ENCODE measurements at regions of chr16 and their contacts with region 1.

Region 1: DNA sequence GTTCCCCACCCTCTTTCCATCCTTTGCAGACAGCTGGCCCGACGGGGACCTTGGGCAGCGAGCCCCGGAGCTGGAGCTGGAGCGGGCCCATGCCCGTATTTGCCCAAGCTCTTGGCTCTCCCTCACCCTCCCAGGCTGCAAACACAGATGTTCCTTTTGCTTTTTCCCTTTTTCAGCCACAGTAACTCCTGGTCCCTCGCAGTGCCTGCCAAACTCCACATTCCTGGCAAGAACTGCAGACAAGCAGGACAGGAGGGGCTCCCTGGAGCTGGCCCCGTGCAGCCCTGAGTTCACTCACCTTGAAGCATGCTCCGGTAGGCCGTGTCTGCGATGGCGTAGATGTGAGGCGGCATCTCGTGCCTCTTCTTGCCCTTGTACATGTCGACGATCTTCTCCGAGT is 33.9 kb downstream of the MYH11 start:
- DNase-seq: no peak
- ATAC-seq: no peak
- H3K4me3 Mint-ChIP-seq: no peak overlapping the region
- H3K27ac Mint-ChIP-seq: no peak overlapping the region
- H3K4me1 Mint-ChIP-seq: no peaks in the 10 kb centered on the region
- H3K27me3 Mint-ChIP-seq: no peaks in the 10 kb centered on the region; the same call in none of the 2 replicates
- CTCF ChIP-seq: no peak

Region 2: DNA sequence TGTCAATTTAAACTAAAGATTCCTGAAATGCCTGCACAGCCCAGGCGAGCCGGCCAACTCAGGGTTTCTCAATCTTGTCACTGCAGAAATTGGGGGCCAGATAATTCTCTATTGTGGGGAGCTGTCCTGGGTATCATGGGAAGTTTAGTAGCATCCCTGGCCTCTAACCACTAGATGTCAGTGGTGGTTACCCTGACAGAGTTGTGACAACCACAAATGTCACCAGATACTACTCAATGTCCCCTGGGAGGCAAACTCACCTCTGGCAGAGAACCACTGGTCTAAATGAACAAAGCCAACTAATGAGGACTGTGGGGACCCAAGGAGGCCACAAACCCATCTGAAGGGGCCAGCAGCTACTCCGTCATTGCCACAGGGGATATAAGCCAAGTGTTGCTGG is 57.1 kb before region 1 on chr16:
- CTCF ChIA-PET with region 1: interaction called, 18 read pairs
- POLR2A ChIA-PET with region 1: no interaction called
- DNase-seq: peak; percentile 26
- ATAC-seq: peak; percentile 90
- H3K4me3 Mint-ChIP-seq: no peak overlapping the region
- H3K27ac Mint-ChIP-seq: no peak overlapping the region
- H3K4me1 Mint-ChIP-seq: peaks cover 6% of the 10 kb centered on the region
- H3K27me3 Mint-ChIP-seq: no peaks in the 10 kb centered on the region
- CTCF ChIP-seq: peak; percentile 32; the same call in 1 of the 2 replicates

Region 3: DNA sequence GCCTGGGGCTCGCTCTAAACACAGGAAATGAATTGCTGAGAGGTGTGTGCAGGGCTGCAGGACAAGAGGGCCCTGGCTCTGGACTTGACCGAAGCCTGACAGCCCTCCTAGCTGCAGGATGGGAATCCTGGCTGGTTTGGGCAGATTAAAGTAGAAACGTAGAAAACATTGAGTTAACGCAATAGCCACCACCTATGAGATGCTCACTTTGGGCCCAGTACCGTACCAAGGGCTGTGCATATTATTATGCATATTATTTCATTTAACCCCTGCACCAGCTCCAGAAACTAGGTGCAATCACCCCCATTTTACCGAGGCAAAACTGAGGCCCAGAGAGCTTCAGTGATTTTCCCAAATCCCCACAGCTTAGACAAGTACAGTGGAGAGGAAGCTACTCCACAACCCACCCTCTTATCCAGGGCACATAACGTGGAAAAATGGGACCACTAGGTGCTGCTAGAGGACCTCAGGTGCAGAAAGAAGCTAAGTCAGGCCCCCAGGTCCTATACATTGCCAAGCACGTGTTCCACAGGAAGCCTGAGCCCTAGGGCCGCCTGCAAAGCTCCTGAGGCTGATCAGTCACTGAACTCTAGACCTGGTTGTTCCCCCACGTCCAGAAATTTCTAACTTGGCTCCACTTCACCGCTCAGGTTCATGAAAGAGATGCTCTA is 45.3 kb before region 1 on chr16:
- CTCF ChIA-PET with region 1: interaction called, 87 read pairs
- POLR2A ChIA-PET with region 1: no interaction called
- DNase-seq: peak; percentile 58
- ATAC-seq: peak; percentile 99
- H3K4me3 Mint-ChIP-seq: no peak overlapping the region
- H3K27ac Mint-ChIP-seq: no peak overlapping the region
- H3K4me1 Mint-ChIP-seq: peaks cover 3% of the 10 kb centered on the region; the same call in 1 of the 2 replicates
- H3K27me3 Mint-ChIP-seq: peaks cover 9% of the 10 kb centered on the region
- CTCF ChIP-seq: no peak

Region 4: GRCh38 chr16:15803618-15804017 is 19.3 kb before region 1 on chr16:
- CTCF ChIA-PET with region 1: interaction called, 17 read pairs
- POLR2A ChIA-PET with region 1: no interaction called
- DNase-seq: no peak
- ATAC-seq: no peak
- H3K4me3 Mint-ChIP-seq: no peak overlapping the region
- H3K27ac Mint-ChIP-seq: no peak overlapping the region
- H3K4me1 Mint-ChIP-seq: peaks cover 11% of the 10 kb centered on the region
- H3K27me3 Mint-ChIP-seq: no peaks in the 10 kb centered on the region
- CTCF ChIP-seq: no peak

Region 5: GRCh38 chr16:15811481-15812400 is 11.2 kb before region 1 on chr16:
- CTCF ChIA-PET with region 1: interaction called, 17 read pairs
- POLR2A ChIA-PET with region 1: no interaction called
- DNase-seq: no peak
- ATAC-seq: no peak
- H3K4me3 Mint-ChIP-seq: no peak overlapping the region
- H3K27ac Mint-ChIP-seq: no peak overlapping the region
- H3K4me1 Mint-ChIP-seq: peaks cover 11% of the 10 kb centered on the region; the same call in 1 of the 2 replicates
- H3K27me3 Mint-ChIP-seq: peaks cover 16% of the 10 kb centered on the region
- CTCF ChIP-seq: no peak

Region 6: DNA sequence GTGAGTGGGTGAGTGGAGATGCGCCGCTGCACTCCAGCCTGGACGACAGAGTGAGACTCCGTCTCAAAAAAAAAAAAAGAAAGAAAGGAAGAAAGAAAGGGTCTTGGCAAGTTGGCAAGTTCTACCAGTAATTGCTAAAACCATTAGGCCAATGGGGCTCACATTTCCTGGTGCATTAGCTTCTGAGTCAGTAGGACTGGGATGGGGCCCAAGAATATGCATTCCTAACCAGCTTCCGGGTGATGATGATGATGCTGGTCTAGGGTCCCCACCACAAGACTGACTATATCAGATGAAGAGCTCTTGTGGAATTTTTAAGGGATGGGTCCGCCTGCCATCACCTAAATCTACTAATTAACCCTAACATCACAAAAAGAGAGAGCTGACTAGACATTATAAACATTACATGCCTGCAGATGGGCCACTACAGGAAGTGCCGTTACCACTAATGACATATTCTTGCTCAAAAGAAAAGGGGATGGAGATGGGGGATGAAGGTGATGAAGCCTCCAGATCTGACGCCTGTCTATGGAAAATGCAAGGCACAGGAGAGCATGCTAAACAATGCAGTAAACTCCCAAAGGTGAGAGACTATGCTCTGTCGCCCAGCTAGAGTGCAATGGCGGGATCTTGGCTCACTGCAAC is 20.8 kb after region 1 on chr16:
- CTCF ChIA-PET with region 1: interaction called, 10 read pairs
- POLR2A ChIA-PET with region 1: no interaction called
- DNase-seq: no peak
- ATAC-seq: no peak
- H3K4me3 Mint-ChIP-seq: no peak overlapping the region
- H3K27ac Mint-ChIP-seq: no peak overlapping the region
- H3K4me1 Mint-ChIP-seq: no peaks in the 10 kb centered on the region
- H3K27me3 Mint-ChIP-seq: no peaks in the 10 kb centered on the region
- CTCF ChIP-seq: no peak

Region 7: DNA sequence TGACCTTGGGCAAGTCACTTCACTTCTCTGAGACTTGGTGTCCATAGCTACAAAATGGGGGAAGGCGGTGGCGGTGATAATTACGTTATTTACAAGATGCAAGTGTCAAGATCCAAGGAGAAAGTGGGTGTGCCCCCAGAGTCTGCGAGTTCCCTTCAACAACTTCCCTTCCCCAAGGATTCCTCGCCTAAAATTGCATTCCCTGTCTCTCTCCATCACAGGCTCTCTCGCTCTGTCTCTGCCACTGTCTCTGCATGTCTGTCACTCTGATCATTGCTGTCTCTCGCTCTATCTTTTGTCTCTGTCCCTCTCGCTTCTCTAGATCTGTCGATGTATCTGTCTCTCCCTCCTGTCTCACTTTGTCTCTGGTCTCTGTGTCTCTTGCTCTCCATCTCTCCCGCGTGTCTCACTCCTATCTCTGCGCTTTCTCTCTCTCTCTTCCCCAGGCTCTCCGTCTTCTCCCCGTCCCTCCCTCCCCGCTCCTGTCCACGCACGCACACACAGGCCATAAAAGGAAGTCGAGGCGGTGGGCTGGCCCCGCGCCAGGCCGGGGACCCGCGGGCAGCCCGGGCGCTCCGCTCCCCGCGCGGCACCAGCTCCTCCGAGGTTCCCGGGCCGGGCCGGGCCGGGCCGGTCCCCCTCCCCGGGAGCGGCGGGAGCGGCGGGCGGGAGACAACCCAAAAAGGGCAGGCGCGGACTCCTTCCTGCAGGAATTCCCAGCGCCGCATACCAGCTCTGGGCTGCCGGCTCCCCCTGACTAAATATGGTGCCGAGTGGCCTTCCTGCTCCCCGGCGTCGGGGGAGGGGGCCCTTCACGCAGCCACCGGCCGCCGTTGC is 35.0 kb after region 1 on chr16:
- CTCF ChIA-PET with region 1: interaction called, 12 read pairs
- POLR2A ChIA-PET with region 1: interaction called, 3 read pairs
- DNase-seq: peak; percentile 69
- ATAC-seq: peak; percentile 65
- H3K4me3 Mint-ChIP-seq: peak overlapping the region; percentile 84
- H3K27ac Mint-ChIP-seq: no peak overlapping the region
- H3K4me1 Mint-ChIP-seq: peaks cover 5% of the 10 kb centered on the region
- H3K27me3 Mint-ChIP-seq: peaks cover 58% of the 10 kb centered on the region
- CTCF ChIP-seq: no peak